ENCODE measurements at regions of chr7 and their contacts with region 1.

Region 1: GRCh38 chr7:66493235-66494181 is 135.2 kb upstream of the KCTD7 start:
- DNase-seq: peak; percentile 97
- H3K4me3 Mint-ChIP-seq: peak overlapping the region; percentile 85
- H3K27ac Mint-ChIP-seq: peak overlapping the region; percentile 91
- H3K4me1 Mint-ChIP-seq: peaks cover 13% of the 10 kb centered on the region
- H3K27me3 Mint-ChIP-seq: no peaks in the 10 kb centered on the region

Region 2: DNA sequence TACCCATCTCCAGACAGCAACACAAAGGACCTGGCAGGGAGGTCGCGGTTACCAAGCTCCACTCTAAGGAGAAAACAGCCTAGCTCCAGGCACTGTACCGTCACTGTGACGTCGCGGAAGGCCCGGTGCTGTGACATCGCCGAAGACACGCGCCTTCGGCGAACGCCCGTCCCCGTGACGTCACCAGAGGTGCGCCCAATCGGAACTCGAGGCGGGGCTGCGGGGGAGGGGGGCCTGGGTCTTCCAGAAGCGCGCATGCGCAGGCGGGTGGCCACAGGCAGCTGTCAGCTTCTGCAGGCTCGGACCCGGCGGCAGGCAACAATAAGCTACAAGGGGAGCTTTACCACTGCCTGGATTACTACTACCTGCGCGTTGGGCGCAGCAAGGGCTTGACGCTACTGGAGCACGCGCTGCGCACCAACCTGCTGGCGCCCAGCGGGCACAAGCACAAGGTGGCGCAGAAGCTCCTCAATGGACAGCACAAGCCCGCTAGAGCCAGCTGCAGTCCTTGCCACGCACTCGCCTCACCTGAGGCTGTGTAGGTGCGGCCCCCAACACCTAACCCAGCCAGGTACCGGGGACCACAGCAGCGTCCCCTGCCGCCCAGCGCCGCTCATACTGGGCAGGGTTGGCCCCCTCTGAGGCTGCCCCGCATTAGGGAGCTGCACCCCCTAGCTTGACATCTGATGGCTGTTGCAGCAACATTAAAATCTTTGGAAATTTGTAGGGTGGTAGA is 80.0 kb before region 1 on chr7:
- CTCF ChIA-PET with region 1: interaction called, 9 read pairs
- POLR2A ChIA-PET with region 1: interaction called, 10 read pairs
- intact Hi-C with region 1: loop called (anchors 1 kb)
- DNase-seq: peak; percentile 86
- H3K4me3 Mint-ChIP-seq: peak overlapping the region; percentile 55
- H3K27ac Mint-ChIP-seq: no peak overlapping the region
- H3K4me1 Mint-ChIP-seq: peaks cover 7% of the 10 kb centered on the region
- H3K27me3 Mint-ChIP-seq: no peaks in the 10 kb centered on the region

Region 3: DNA sequence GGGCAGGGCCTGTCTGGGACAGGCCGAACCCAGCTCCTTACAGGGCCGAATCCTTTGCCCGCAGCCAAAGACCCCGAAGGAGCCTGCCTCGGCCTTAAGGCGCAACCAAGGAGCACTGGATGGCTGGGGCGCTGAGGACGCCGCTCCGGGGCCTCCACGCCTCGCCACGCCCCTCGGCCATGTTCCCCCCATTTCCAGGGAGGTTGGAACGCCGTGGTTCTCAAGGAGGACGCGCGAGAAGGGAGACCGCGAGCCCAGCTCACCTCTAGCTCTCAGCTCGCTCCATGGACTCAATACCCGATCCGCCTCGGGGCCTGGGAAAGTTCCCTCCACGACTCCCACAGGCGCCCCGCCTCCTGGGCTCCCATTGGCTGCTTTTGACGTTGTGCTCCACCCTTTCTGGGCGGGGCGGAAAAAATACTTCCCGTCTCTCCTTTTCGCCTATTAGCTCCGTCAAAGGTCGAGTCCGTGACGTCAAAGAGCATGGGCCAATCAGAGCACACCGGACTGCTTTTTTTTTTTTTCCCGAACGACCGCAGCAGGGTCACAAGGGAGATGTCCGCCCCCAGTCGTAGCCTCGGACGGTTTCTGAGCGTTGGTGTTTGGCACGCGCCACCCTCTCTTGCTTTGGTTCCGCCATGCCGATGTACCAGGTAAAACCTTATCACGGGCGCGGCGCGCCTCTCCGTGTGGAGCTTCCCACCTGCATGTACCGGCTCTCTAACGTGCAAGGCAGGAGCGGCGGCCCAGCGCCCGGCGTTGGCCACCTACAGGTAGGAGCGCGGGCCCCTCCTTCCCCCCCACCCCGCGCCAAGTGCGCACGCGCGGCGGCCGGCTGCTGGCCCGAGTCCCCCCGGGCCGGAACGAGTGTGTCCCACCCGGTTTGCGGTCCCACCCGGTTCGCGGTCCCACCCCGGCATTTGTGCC is 808.9 kb after region 1 on chr7:
- CTCF ChIA-PET with region 1: no interaction called
- POLR2A ChIA-PET with region 1: no interaction called
- intact Hi-C with region 1: loop called (anchors 10 kb)
- DNase-seq: peak; percentile 99
- H3K4me3 Mint-ChIP-seq: peak overlapping the region; percentile 88
- H3K27ac Mint-ChIP-seq: peak overlapping the region; percentile 94
- H3K4me1 Mint-ChIP-seq: peaks cover 17% of the 10 kb centered on the region
- H3K27me3 Mint-ChIP-seq: no peaks in the 10 kb centered on the region

Measured in activated CD4-positive, alpha-beta memory T cell treated with anti-CD3 and anti-CD28 coated beads for 36 hours (primary cell).